Sigmoid colon (tissue), 7 donors: ENCODE measurements at regions of chr5 and their contacts with region 1.

Region 1: DNA sequence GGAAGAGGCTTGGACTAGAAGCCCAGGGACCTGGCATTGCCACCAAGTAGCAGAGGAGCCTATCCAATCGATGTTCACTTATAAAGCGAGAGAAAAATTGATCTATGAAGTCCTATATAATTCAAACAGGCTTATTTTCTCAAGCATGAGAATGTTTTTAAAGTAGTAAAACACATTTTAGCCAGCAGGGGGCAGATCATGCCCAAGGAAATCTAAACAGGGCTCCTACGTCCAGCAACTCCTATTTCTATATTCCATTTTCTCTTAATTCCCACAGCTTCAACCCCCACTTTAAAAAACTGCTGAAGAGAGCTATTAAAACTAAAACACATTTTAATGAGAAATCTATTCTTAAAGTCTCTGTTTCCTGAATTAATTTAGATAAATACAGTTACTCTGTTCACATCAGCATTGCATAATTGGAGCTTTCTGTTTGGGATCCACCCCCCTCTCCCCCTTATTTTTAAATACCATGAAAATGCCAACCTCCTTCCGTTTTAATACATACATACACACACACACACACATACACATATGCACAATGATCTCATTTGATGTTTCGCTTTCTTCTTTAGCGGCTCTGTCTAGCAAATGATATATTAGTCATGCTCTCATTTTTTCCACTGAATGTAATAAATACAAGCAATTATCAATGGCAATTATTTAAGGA is 144.9 kb downstream of the MYO10 start:
- DNase-seq: no peak
- H3K4me3 ChIP-seq: no peak overlapping the region
- H3K27ac ChIP-seq: no peak overlapping the region
- H3K4me1 ChIP-seq: no peaks in the 10 kb centered on the region
- H3K27me3 ChIP-seq: no peaks in the 10 kb centered on the region
- CTCF ChIP-seq: peak; percentile 61 to 75 (median 68)
- EP300 ChIP-seq: no peak
- POLR2A ChIP-seq: no peak

Region 2: DNA sequence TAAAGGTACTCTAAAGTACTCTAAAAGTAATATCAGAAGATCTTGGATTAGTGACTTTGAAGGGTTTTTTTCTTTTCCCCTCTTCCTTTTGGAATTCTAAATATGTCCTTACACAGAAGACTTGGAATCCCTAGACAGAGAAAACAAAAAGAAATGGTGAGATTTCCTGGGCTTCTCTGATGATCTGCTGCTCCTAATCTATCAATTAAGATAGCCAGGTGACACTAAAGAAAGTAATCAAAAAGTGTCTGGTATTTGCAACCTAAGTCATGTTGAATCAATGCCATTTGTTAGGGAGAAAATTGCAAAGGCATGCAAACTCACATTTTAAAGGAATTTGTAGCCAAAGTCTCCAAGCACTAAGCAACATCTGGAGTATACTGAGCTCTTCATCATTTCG is 174.4 kb after region 1 on chr5:
- intact Hi-C with region 1: no loop called
- DNase-seq: no peak
- H3K4me3 ChIP-seq: no peak overlapping the region
- H3K27ac ChIP-seq: no peak overlapping the region
- H3K4me1 ChIP-seq: no peaks in the 10 kb centered on the region
- H3K27me3 ChIP-seq: no peaks in the 10 kb centered on the region
- CTCF ChIP-seq: no peak
- EP300 ChIP-seq: no peak
- POLR2A ChIP-seq: no peak

Region 3: GRCh38 chr5:17132444-17133083 is 341.4 kb after region 1 on chr5:
- intact Hi-C with region 1: loop called (anchors 5 kb)
- DNase-seq: no peak
- H3K4me3 ChIP-seq: no peak overlapping the region
- H3K27ac ChIP-seq: no peak overlapping the region
- H3K4me1 ChIP-seq: no peaks in the 10 kb centered on the region
- H3K27me3 ChIP-seq: peaks cover 0 to 9% (median 0%) of the 10 kb centered on the region in 3 donors
- CTCF ChIP-seq: peak in 2 of 4 experiments; percentile 52 to 61
- EP300 ChIP-seq: no peak
- POLR2A ChIP-seq: no peak

Region 4: DNA sequence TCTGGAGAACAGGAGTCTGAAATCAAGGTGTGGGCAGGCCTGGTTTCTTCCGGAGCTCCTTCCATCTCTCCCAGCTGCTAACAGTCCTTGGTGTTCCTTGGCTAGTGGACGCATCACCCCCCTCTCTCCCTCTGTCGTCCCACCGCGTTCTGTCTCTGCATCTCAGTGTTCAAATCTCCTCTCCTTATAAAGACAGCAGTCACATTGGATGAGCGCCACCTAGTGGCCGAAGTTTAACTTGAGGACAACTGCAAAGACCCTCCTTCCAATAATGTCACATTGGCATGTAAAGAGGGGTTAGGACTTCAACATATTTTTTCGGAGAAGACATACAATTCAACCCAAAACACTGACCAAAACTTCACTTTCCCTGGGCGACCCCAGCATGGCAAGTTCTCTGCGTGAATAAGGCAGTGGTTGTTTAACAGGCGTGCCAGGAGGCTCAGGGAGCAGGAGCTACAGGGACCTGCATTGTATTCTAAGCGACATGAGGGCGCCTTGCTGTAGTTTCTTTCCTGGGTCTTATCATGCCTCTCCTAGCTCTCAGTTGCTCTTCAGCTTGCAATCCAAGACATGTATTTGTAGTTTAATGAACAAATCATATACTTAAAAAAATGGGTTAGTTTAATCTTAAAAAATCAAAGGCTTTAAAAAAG is 398.3 kb after region 1 on chr5:
- intact Hi-C with region 1: loop called (anchors 2 kb)
- DNase-seq: peak; percentile 80
- H3K4me3 ChIP-seq: no peak overlapping the region
- H3K27ac ChIP-seq: peak overlapping the region in 1 of 4 donors; percentile 6
- H3K4me1 ChIP-seq: peaks cover 0 to 11% (median 0%) of the 10 kb centered on the region in 4 donors
- H3K27me3 ChIP-seq: no peaks in the 10 kb centered on the region
- CTCF ChIP-seq: peak; percentile 22 to 75 (median 66)
- EP300 ChIP-seq: no peak
- POLR2A ChIP-seq: no peak

Region 5: GRCh38 chr5:17204133-17204489 is 412.9 kb after region 1 on chr5:
- intact Hi-C with region 1: loop called (anchors 1 kb)
- DNase-seq: peak; percentile 41
- H3K4me3 ChIP-seq: no peak overlapping the region
- H3K27ac ChIP-seq: no peak overlapping the region
- H3K4me1 ChIP-seq: no peaks in the 10 kb centered on the region
- H3K27me3 ChIP-seq: peaks cover 0 to 29% (median 0%) of the 10 kb centered on the region in 3 donors
- CTCF ChIP-seq: no peak
- EP300 ChIP-seq: no peak
- POLR2A ChIP-seq: no peak